ENCODE measurements at regions of chr16 and their contacts with region 1.

Region 1: GRCh38 chr16:75372236-75372856 is 61.0 kb downstream of the CFDP1 start:
- DNase-seq: peak; percentile 12
- H3K4me3 ChIP-seq: no peak overlapping the region
- CTCF ChIP-seq: no peak

Region 2: GRCh38 chr16:75265845-75266701 is 106.3 kb before region 1 on chr16:
- in situ Hi-C with region 1: no loop called
- DNase-seq: no peak
- H3K4me3 ChIP-seq: peak overlapping the region; percentile 98
- CTCF ChIP-seq: no peak

Region 3: GRCh38 chr16:75311383-75311938 is 60.9 kb before region 1 on chr16:
- in situ Hi-C with region 1: loop called (anchors 5 kb)
- DNase-seq: no peak
- H3K4me3 ChIP-seq: no peak overlapping the region
- CTCF ChIP-seq: no peak